Pancreas (tissue), 10 donors: ENCODE measurements at regions of chr10 and their contacts with region 1.

Region 1: GRCh38 chr10:72692057-72692910 is at the start of gene MCU:
- DNase-seq: peak; percentile 73 to 98 (median 95)
- ATAC-seq: peak; percentile 89 to 95 (median 92)
- H3K4me3 ChIP-seq: peak within 1 kb of the TSS; percentile 48 to 78 (median 56)
- H3K27ac ChIP-seq: peak within 1 kb of the TSS; percentile 79 to 93 (median 88)
- H3K4me1 ChIP-seq: peaks cover 7 to 14% (median 8%) of the 10 kb centered on the region in 3 donors
- H3K27me3 ChIP-seq: no peaks in the 10 kb centered on the region
- CTCF ChIP-seq: no peak
- total RNA-seq, gene MCU: 6.3 to 15.5 (median 10.7) TPM

Region 2: GRCh38 chr10:72834183-72834825 is 142.0 kb after region 1 on chr10:
- intact Hi-C with region 1: loop called in 1 of 3 experiments (anchors 10 kb)
- DNase-seq: peak in 3 of 6 donors; percentile 11 to 40 (median 24)
- ATAC-seq: peak; percentile 69 to 91 (median 88)
- H3K4me3 ChIP-seq: no peak overlapping the region
- H3K27ac ChIP-seq: no peak overlapping the region
- H3K4me1 ChIP-seq: peaks cover 3 to 23% (median 23%) of the 10 kb centered on the region in 3 donors
- H3K27me3 ChIP-seq: no peaks in the 10 kb centered on the region
- CTCF ChIP-seq: peak in 3 of 4 donors; percentile 23 to 40 (median 38)